Cardiac septum (tissue), 1 donor: ENCODE measurements at regions of chr11 and their contacts with region 1.

Region 1: GRCh38 chr11:11036848-11037732 is 179.2 kb upstream of the ZBED5 start:
- DNase-seq: no peak

Region 2: DNA sequence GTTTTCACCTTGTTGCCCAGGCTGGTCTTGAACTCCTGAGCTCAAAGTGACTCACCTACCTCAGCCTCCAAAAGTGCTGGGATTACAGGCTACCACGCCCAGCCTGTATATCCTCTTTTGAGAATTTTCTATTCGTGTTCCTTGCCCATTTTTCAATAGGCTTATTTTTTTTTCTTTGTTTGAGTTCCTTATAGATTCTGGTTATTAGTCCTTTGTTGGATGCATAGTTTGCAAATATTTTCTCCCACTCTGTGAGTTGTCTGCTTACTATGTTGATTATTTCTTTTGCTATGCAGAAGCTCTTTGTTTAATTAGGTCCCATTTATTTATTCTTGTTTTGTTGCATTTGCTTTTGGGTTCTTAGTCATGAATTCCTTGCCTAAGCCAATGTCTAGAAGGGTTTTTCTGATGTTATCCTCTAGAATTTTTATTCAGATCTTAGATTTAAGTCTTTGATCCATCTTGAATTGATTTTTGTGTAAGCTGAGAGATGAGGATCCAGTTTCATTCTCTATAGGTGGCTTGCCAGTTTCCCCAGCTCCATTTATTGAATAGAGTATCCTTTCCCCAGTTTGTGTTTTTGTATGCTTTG is 161.6 kb before region 1 on chr11:
- intact Hi-C with region 1: no loop called
- DNase-seq: no peak

Region 3: DNA sequence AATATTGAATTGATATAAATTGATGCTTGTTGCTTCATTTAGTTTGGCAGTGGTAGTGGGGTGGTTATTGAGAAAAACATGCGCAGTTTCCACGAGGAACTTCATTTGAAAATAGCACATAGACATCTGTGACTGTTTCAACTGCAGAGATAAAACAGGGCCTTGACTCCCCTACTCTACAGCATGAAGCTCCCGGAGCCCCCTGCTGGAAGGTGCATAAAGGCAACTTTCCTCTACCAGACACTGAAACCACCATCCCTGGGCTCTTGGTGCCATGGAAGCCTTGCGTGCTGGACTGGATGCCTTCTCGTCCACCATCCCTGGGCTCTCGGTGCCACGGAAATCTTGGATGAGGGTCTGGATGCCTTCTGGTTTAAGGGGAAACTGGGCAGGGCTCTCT is 120.1 kb after region 1 on chr11:
- intact Hi-C with region 1: loop called (anchors 5 kb)
- DNase-seq: no peak

Region 4: GRCh38 chr11:11265994-11266606 is 229.0 kb after region 1 on chr11:
- intact Hi-C with region 1: loop called (anchors 5 kb)
- DNase-seq: no peak